ENCODE measurements at regions of chr19 and their contacts with region 1.

Region 1: DNA sequence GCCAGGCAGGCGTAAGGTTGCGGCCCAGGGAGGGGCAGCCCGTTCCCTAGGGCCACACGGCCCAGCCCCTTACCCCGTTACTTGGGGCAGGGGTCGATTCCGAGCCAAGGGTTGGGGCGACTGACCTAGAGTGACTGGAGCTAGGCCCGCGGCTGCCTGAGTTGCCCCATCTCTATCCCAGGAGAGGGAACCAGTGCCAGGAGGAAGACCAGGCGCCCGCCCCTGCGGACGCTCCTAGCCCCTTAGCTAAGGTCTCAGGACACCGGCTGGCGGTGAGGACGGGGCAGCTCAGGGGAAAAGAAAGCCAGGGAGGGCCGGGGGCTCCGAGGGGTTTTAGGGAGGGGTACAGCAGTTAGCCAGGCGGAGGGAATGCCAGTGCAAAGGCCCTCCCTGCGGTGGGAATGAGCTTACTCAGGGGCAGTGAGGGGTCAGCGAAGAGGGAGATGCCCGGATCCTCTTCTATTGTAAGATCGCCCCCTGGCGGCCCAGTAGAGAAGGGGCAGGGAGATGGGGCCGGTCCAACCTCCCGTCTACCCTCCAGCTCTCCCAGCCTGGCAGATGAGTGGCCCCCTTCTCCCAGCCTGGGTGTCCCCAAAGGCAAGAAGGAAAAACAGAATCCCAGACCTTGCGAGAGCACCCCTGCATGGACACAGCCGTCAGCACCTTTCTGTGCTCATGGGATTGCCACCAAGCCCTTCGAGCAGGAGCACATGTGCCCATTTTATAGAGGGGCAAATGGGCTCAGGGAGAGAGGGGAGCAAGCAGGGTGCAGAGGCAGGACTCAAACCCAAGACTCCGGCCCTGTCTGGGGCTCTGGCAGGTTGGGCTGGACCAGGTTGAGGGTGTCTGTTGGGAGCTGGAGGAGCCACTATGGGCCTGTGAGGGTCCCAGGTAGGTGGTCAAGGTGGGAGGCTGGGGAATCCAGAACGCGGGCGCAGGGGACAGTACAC is 16.3 kb downstream of the CILP2 start:
- DNase-seq: peak; percentile 55
- ATAC-seq: peak; percentile 51; the same call in 1 of the 2 replicates
- H3K4me3 ChIP-seq: no peak overlapping the region
- H3K27ac ChIP-seq: no peak overlapping the region
- H3K4me1 ChIP-seq: no peaks in the 10 kb centered on the region
- H3K27me3 ChIP-seq: no peaks in the 10 kb centered on the region
- CTCF ChIP-seq: peak; percentile 77

Region 2: GRCh38 chr19:19372656-19373416 is 181.5 kb before region 1 on chr19:
- CTCF ChIA-PET with region 1: no interaction called
- POLR2A ChIA-PET with region 1: no interaction called
- intact Hi-C with region 1: no loop called
- DNase-seq: peak; percentile 78
- ATAC-seq: peak; percentile 86
- H3K4me3 ChIP-seq: no peak overlapping the region
- H3K27ac ChIP-seq: peak overlapping the region; percentile 48
- H3K4me1 ChIP-seq: peaks cover 22% of the 10 kb centered on the region
- H3K27me3 ChIP-seq: no peaks in the 10 kb centered on the region
- CTCF ChIP-seq: no peak

Region 3: DNA sequence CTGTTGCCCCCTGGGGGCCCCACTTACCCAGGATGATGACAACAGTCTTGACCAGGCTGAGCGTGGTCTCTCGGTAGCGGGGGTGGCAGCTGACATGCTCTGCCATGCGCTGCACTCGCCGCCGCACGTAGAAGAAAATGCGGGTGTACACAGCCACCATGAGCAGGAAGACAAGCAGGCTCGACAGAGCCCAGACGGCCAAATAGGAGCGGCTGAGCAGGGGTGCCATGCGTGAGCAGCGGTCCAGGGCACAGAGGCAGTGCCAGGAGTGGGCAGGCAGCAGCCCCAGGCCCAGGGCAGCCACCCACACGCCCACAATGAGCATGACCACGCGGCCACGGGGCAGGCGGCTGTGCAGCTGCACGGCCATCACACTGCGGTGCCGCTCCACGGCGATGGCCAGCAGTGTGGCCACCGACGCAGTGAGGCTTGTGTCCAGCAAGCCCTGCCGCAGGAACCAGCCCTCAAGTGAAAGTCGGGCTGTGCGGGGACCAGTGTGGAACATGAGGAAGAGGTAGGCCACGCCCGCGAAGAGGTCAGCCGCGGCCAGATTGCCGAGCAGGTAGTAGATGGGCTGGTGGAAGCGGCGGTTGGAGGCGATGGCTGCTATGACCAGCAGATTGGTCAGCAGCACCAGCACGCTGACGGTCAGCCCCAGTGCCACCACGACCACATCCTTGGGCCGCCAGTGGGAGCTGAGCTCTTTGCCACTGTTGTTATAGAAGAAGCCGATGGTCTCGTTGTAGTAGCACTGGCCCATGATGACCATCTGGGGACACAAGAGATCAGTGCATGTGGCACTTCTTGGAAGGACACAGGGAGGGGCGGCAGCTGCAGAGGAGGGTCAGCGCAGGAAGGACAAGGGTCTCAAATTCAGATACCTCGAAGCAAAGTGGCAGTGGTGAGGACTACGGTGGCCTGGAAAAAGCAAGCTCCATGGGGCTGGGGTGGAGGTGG is 72.4 kb after region 1 on chr19:
- CTCF ChIA-PET with region 1: no interaction called
- POLR2A ChIA-PET with region 1: no interaction called
- intact Hi-C with region 1: no loop called
- DNase-seq: no peak
- ATAC-seq: no peak
- H3K4me3 ChIP-seq: peak overlapping the region; percentile 84
- H3K27ac ChIP-seq: 0 out of 2 replicates have a peak overlapping the region, but pooled peaks have one; percentile 83
- H3K4me1 ChIP-seq: peaks cover 13% of the 10 kb centered on the region
- H3K27me3 ChIP-seq: no peaks in the 10 kb centered on the region
- CTCF ChIP-seq: no peak

Region 4: GRCh38 chr19:19643158-19644053 is 89.1 kb after region 1 on chr19 and contains the start of gene GMIP:
- CTCF ChIA-PET with region 1: interaction called, 4 read pairs
- POLR2A ChIA-PET with region 1: no interaction called
- intact Hi-C with region 1: loop called (anchors 5 kb)
- DNase-seq: peak; percentile 68
- ATAC-seq: peak; percentile 86
- H3K4me3 ChIP-seq: peak within 1 kb of the TSS; percentile 91
- H3K27ac ChIP-seq: peak within 1 kb of the TSS; percentile 56
- H3K4me1 ChIP-seq: peaks cover 3% of the 10 kb centered on the region; the same call in 1 of the 2 replicates
- H3K27me3 ChIP-seq: no peaks in the 10 kb centered on the region
- CTCF ChIP-seq: peak; percentile 96
- total RNA-seq, gene GMIP: 6.3 and 11.1 TPM in 2 replicates